Mammary epithelial cell (primary cell): ENCODE measurements at regions of chr12 and their contacts with region 1.

Region 1: DNA sequence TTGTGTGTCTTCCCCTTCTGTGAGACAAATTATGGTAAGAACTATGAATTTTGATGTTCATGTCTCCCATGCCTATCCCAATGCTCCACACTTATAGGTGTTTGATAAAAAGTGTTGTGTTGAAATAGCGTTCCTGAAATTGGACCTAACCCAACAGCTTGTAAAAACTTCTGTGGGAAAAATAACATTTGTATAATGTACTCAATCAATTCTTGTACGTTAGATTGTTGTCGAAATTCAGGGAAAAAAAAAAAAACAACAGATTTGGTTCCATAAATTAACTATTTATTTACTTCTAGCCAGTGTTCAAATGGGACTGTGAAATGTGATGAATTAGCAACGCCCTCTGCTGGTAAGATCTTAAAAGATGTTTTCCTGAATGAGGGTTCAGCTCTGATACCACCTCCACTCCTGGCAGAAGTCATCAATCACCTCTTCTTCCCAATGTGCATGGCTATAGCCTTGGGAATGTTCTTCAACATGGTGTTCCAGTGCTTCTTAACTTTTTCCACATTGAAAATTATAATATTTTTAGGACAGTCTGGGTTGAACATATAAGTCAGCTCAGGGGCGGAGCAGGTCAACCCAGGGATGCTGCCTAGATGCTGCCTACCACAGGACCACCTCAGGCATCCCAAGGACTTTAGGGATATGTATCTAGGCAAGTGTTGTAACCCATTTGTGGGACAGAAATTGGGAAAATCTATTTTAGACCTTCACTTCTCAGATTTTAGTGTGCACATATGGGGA is 170.6 kb downstream of the OTOGL start:
- DNase-seq: peak; percentile 16
- H3K4me3 ChIP-seq: no peak overlapping the region
- H3K27ac ChIP-seq: no peak overlapping the region
- H3K4me1 ChIP-seq: peaks cover 18% of the 10 kb centered on the region
- H3K27me3 ChIP-seq: no peaks in the 10 kb centered on the region
- CTCF ChIP-seq: peak; percentile 60 to 62

Region 2: DNA sequence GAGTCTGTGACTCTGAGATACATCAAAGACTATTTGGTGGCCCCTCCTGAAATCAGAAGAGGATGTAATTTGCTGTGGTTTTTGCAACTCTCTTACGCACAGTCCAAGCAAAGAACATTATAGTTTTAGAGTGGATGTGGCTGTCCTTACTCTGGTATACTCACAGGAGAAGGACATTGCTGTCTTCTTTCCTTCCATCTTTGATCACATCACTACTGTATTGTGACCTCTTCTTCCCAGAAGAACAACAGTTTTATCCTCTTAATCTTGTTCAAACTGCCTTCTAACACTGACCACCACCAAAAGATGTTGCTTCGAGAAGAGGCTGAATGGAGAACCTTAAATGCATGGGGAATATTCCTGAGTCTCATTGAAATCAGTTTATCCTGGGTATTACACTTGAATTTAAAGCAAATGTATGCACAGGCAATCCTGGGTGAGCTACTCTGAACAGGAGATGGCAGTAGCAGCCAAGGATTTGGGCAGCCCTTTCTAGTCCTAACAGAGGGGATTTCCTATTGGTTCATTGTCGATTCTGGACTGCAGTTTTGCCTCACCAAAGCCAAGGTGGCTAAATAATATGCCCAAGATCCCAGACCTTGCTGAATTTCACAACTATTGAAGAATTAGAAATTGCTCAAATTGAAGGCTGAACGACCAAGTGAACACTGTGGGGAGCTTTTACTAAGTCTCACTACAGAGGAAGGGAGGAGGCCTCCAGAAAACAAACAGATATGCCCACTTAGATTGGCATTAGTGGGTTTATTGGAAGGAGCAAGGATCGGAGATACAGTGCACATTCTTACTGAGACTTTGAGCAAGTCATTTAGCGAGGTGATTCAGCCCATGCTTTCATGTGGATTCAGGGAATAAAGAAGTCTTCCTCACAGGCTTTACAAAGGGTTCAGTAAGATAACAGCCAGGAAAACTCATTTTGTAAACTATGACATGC is 862.0 kb before region 1 on chr12:
- CTCF ChIA-PET with region 1: no interaction called
- dilution Hi-C with region 1: no loop called
- in situ Hi-C with region 1: loop called in 1 of 2 experiments (anchors 10 kb)
- intact Hi-C with region 1: loop called (anchors 1 kb)
- DNase-seq: peak; percentile 81
- H3K4me3 ChIP-seq: no peak overlapping the region
- H3K27ac ChIP-seq: peak overlapping the region; percentile 20
- H3K4me1 ChIP-seq: peaks cover 38% of the 10 kb centered on the region
- H3K27me3 ChIP-seq: no peaks in the 10 kb centered on the region
- CTCF ChIP-seq: peak; percentile 83 to 90

Region 3: GRCh38 chr12:80142640-80143039 is 127.3 kb before region 1 on chr12:
- CTCF ChIA-PET with region 1: no interaction called
- dilution Hi-C with region 1: no loop called
- in situ Hi-C with region 1: no loop called
- intact Hi-C with region 1: no loop called
- DNase-seq: peak; percentile 10
- H3K4me3 ChIP-seq: no peak overlapping the region
- H3K27ac ChIP-seq: no peak overlapping the region
- H3K4me1 ChIP-seq: no peaks in the 10 kb centered on the region
- H3K27me3 ChIP-seq: peaks cover 2% of the 10 kb centered on the region
- CTCF ChIP-seq: no peak

Region 4: GRCh38 chr12:80195074-80195726 is 74.8 kb before region 1 on chr12:
- CTCF ChIA-PET with region 1: interaction called, 41 read pairs
- dilution Hi-C with region 1: no loop called
- in situ Hi-C with region 1: loop called in 1 of 2 experiments (anchors 10 kb)
- intact Hi-C with region 1: loop called (anchors 1 kb)
- DNase-seq: peak; percentile 35
- H3K4me3 ChIP-seq: no peak overlapping the region
- H3K27ac ChIP-seq: no peak overlapping the region
- H3K4me1 ChIP-seq: no peaks in the 10 kb centered on the region
- H3K27me3 ChIP-seq: no peaks in the 10 kb centered on the region
- CTCF ChIP-seq: peak; percentile 71 to 82

Region 5: DNA sequence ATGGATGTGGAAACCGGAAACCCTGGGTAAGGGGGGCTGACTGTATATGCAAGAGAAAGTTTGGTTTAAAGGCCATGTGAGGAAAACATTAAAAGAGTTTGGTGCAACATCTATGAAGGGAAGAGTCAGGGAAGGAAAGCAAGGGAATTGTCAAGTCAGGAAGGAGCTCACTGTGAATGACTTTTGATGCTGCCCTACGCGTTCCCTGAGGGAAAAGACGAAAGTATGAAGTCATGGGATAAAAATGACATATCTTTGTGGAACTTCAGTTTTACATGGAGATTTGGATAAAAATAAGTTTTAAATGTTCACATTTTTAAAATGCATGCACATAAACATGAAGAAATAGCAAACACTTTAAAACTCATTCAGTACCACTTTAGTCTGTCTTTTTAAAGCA is 73.9 kb after region 1 on chr12:
- CTCF ChIA-PET with region 1: no interaction called
- dilution Hi-C with region 1: no loop called
- in situ Hi-C with region 1: no loop called
- intact Hi-C with region 1: no loop called
- DNase-seq: no peak
- H3K4me3 ChIP-seq: no peak overlapping the region
- H3K27ac ChIP-seq: no peak overlapping the region
- H3K4me1 ChIP-seq: no peaks in the 10 kb centered on the region
- H3K27me3 ChIP-seq: peaks cover 2% of the 10 kb centered on the region
- CTCF ChIP-seq: no peak